A673 (cell line): ENCODE measurements at regions of chr4 and their contacts with region 1.

Region 1: GRCh38 chr4:65007841-65008439 is 598.7 kb upstream of the TECRL start:
- DNase-seq: peak; percentile 53
- H3K4me3 ChIP-seq: no peak overlapping the region
- H3K27ac ChIP-seq: no peak overlapping the region
- H3K4me1 ChIP-seq: no peaks in the 10 kb centered on the region
- H3K27me3 ChIP-seq: no peaks in the 10 kb centered on the region
- CTCF ChIP-seq: peak; percentile 62

Region 2: GRCh38 chr4:64330143-64330542 is 677.8 kb before region 1 on chr4:
- CTCF ChIA-PET with region 1: no interaction called
- POLR2A ChIA-PET with region 1: no interaction called
- intact Hi-C with region 1: no loop called
- DNase-seq: no peak
- H3K4me3 ChIP-seq: no peak overlapping the region
- H3K27ac ChIP-seq: no peak overlapping the region
- H3K4me1 ChIP-seq: no peaks in the 10 kb centered on the region
- H3K27me3 ChIP-seq: no peaks in the 10 kb centered on the region
- CTCF ChIP-seq: no peak

Region 3: DNA sequence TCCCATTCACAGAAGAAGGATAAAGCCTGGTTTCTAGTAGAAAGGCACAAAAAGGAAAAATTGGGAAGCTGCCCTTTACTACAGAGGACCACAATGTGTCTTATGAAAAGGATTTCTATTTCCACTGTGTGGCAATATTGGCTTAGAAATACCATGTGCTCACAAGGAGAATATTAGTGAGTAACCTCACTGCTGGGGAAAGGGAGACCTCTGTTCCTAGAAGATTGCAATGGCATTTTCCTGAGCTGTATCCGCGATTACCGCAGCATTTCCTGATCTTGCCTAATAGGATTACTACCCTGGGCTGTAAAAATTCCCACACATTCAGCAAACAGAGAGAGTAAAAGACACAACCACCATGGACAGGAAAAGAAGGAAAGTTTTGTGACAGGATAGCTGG is 289.8 kb before region 1 on chr4:
- CTCF ChIA-PET with region 1: no interaction called
- POLR2A ChIA-PET with region 1: no interaction called
- intact Hi-C with region 1: loop called (anchors 5 kb)
- DNase-seq: peak; percentile 76
- H3K4me3 ChIP-seq: no peak overlapping the region
- H3K27ac ChIP-seq: no peak overlapping the region
- H3K4me1 ChIP-seq: no peaks in the 10 kb centered on the region
- H3K27me3 ChIP-seq: no peaks in the 10 kb centered on the region
- CTCF ChIP-seq: peak; percentile 31; the same call in 1 of the 2 replicates

Region 4: GRCh38 chr4:64781737-64782326 is 226.1 kb before region 1 on chr4:
- CTCF ChIA-PET with region 1: no interaction called
- POLR2A ChIA-PET with region 1: no interaction called
- intact Hi-C with region 1: loop called (anchors 5 kb)
- DNase-seq: peak; percentile 36
- H3K4me3 ChIP-seq: no peak overlapping the region
- H3K27ac ChIP-seq: no peak overlapping the region
- H3K4me1 ChIP-seq: peaks cover 13% of the 10 kb centered on the region
- H3K27me3 ChIP-seq: no peaks in the 10 kb centered on the region
- CTCF ChIP-seq: peak; percentile 63

Region 5: GRCh38 chr4:65696436-65696835 is 688.5 kb after region 1 on chr4:
- CTCF ChIA-PET with region 1: no interaction called
- POLR2A ChIA-PET with region 1: no interaction called
- intact Hi-C with region 1: loop called (anchors 10 kb)
- DNase-seq: no peak
- H3K4me3 ChIP-seq: no peak overlapping the region
- H3K27ac ChIP-seq: peak overlapping the region; percentile 68
- H3K4me1 ChIP-seq: peaks cover 41% of the 10 kb centered on the region
- H3K27me3 ChIP-seq: no peaks in the 10 kb centered on the region
- CTCF ChIP-seq: no peak